Thyroid gland (tissue), 4 donors: ENCODE measurements at regions of chr2 and their contacts with region 1.

Region 1: GRCh38 chr2:137838255-137839092 is 125.8 kb upstream of the HNMT start:
- DNase-seq: no peak
- H3K4me3 ChIP-seq: no peak overlapping the region
- H3K27ac ChIP-seq: no peak overlapping the region
- H3K4me1 ChIP-seq: no peaks in the 10 kb centered on the region
- H3K27me3 ChIP-seq: no peaks in the 10 kb centered on the region
- CTCF ChIP-seq: peak in 4 of 6 experiments; percentile 61 to 75 (median 64)
- POLR2A ChIP-seq: no peak

Region 2: DNA sequence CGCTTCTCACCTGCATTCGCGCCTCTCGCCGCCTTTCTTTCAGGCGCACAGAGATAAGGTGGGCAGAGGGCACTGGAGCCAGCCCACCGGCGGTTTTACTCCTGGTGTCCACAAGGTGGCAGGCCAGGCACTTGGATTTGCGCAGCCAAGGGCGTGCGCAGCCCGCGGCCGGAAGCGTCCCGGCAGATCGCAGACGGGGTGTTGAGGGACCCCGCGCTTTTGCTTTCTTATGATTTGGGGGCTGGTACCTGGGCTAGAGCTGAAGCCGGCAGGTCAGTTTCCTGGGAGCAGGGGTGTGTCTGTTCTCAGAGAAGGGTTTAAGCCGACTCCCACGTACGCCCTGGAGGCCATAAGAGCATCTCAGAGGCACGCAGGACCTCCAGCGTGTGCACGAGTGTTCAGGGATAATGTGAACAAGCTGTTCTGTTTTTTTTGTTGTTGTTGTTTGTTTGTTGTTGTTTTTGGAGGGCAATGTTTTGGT is 1414.9 kb before region 1 on chr2:
- intact Hi-C with region 1: loop called (anchors 5 kb)
- DNase-seq: peak; percentile 64 to 68
- H3K4me3 ChIP-seq: no peak overlapping the region
- H3K27ac ChIP-seq: no peak overlapping the region
- H3K4me1 ChIP-seq: peaks cover 0 to 5% of the 10 kb centered on the region in 2 donors
- H3K27me3 ChIP-seq: no peaks in the 10 kb centered on the region
- CTCF ChIP-seq: peak; percentile 57 to 86 (median 67)
- POLR2A ChIP-seq: no peak